Panc1 (cell line): ENCODE measurements at regions of chr10 and their contacts with region 1.

Region 1: GRCh38 chr10:59808896-59809643 is 55.8 kb upstream of the MRLN start:
- DNase-seq: peak; percentile 50
- ATAC-seq: peak; percentile 91
- H3K4me3 ChIP-seq: no peak overlapping the region
- H3K27ac ChIP-seq: no peak overlapping the region
- H3K4me1 ChIP-seq: no peaks in the 10 kb centered on the region
- H3K27me3 ChIP-seq: no peaks in the 10 kb centered on the region
- CTCF ChIP-seq: peak; percentile 86

Region 2: GRCh38 chr10:59748834-59749233 is 60.2 kb before region 1 on chr10:
- CTCF ChIA-PET with region 1: no interaction called
- POLR2A ChIA-PET with region 1: interaction called, 11 read pairs
- in situ Hi-C with region 1: no loop called
- intact Hi-C with region 1: no loop called
- DNase-seq: no peak
- ATAC-seq: no peak
- H3K4me3 ChIP-seq: no peak overlapping the region
- H3K27ac ChIP-seq: no peak overlapping the region
- H3K4me1 ChIP-seq: no peaks in the 10 kb centered on the region
- H3K27me3 ChIP-seq: peaks cover 4% of the 10 kb centered on the region; the same call in 1 of the 2 replicates
- CTCF ChIP-seq: no peak